GM12878 (cell line): ENCODE measurements at regions of chr2 and their contacts with region 1.

Region 1: DNA sequence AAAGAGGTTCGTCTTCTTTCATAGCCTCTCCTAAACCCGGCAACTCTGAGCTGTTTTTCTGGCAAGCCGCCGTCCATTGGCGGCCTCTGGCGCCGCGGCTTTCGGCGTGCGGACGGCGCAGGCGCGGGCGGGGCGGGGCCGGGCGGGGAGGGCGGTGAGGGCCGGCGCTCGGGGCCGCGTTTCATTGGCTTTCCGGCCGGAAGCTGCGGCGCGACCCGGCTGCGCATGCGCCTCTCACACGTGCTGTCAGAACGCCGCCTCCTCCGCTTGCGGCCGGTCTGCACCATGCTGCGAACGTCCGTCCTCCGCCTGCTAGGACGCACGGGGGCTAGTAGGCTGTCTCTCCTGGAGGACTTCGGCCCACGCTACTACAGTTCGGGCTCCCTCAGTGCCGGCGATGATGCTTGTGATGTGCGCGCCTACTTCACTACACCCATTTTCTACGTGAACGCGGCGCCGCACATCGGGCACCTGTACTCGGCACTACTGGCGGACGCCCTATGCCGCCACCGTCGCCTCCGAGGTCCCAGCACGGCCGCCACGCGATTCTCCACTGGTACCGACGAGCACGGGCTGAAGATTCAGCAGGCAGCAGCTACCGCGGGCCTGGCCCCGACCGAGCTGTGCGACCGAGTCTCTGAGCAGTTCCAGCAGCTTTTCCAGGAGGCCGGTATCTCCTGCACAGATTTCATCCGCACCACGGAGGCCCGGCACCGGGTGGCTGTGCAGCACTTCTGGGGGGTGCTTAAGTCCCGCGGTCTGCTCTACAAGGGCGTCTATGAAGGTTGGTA is at the start of gene MARS2:
- DNase-seq: peak; percentile 68
- ATAC-seq: peak; percentile 86
- H3K4me3 ChIP-seq: peak within 1 kb of the TSS; percentile 81
- H3K27ac ChIP-seq: peak within 1 kb of the TSS; percentile 61
- H3K4me1 ChIP-seq: peaks cover 5% of the 10 kb centered on the region
- H3K27me3 ChIP-seq: no peaks in the 10 kb centered on the region
- CTCF ChIP-seq: 0 out of 6 replicates have a peak, but pooled peaks of 1 of the 3 experiments have one; percentile 4
- EP300 ChIP-seq: 0 out of 4 replicates have a peak, but pooled peaks of 1 of the 2 experiments have one; percentile 19
- POLR2A ChIP-seq: peak; percentile 98
- RAD21 ChIP-seq: no peak
- polyA plus RNA-seq, gene MARS2: 4.0 to 6.9 TPM

Region 2: DNA sequence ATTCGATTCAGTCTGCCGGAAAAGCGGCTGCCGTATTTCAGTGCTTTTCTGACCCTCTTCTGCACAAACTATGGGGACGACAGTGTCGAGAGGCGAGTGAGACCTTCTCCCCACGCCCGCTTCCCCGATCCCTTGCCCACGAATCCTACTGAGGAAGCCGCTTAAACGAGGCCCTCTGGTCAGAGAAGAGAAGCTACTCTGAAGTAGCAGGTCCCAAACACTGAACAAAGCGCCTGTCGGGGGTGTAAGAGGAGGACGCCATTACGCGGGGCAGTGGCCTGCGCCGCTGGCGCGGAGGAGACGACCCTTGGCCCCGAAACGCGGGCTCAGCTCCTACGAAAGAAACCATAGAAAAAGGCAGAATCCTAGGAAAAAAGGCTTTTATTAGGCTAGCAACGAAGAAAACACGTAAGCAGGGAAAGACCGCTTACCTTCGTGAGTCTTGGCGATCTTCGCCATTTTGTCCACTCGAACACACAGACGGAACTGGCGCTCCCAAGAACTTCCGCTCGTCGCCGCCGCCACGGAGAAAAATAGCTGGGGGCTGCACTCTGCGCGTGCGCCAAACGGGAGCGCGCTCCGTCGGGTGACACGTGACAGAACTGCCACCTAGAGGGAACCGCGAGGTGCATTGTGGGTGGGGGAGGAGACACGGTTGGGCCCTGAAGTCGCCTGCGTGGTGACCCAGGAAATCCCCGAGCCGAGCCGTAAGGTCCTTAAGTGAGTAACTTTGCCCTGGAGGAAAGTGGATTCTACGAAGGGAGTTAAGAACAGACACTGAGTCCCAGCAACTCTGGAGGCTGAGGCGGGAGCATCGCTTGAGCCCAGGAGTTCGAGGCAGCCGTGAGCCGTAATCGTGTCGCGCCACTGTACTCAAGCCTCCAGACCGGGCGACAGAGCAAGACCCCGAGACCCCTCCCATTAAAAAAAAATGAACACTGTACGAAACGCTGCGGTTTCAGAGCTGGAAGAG is 270.5 kb before region 1 on chr2 and contains the start of gene SF3B1:
- CTCF ChIA-PET with region 1: interaction called, 4 read pairs
- POLR2A ChIA-PET with region 1: interaction called, 4 read pairs
- RAD21 ChIA-PET with region 1: interaction called, 3 read pairs
- SMC1A ChIA-PET with region 1: interaction called, 3 read pairs
- in situ Hi-C with region 1: no loop called
- intact Hi-C with region 1: loop called (anchors 2 kb)
- DNase-seq: peak; percentile 95
- ATAC-seq: peak; percentile 91
- H3K4me3 ChIP-seq: peak within 1 kb of the TSS; percentile 92
- H3K27ac ChIP-seq: peak within 1 kb of the TSS; percentile 99
- H3K4me1 ChIP-seq: peaks cover 4% of the 10 kb centered on the region; the same call in 1 of the 2 replicates
- H3K27me3 ChIP-seq: no peaks in the 10 kb centered on the region
- CTCF ChIP-seq: no peak
- EP300 ChIP-seq: peak in 1 of 2 experiments; percentile 51; a peak in 1 of 4 replicates
- POLR2A ChIP-seq: peak; percentile 93
- RAD21 ChIP-seq: no peak
- polyA plus RNA-seq, gene SF3B1: 163 to 170 TPM

Region 3: DNA sequence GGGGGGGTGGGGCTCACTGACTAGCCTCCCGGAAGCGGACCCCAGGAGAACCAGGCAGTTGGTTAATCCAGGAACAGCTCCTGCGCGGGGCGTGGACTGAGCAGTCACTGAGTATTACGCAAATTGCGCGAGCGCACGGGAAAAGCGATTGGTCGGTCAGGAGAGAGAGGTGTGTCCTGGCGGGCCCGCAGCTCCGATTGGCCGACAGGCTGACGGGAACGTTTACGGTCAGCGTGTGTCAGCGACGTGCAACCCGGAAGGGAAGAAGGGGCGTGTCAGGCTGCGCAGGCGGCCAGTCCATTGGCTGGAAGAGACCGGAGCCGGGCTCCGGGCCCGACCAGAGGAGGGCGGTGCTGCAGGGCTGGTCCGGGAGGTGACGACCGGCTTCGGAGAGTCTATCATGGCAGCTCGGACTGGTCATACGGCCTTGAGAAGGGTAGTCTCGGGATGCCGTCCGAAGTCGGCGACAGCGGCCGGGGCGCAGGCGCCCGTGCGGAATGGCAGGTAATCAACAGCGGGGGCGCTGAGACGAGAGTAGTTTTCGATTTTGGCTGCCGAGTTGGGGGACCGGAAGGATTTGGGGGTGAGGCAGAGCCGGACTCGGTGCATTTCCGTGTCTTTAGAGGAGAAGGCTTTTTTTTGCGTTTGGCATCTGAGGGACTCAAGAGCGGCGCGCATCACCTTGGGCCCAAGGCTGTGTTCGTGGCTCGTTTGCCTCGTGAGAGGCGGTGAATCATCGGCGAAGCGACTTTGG is 252.0 kb before region 1 on chr2 and contains the start of gene COQ10B:
- CTCF ChIA-PET with region 1: no interaction called
- POLR2A ChIA-PET with region 1: interaction called, 6 read pairs
- RAD21 ChIA-PET with region 1: interaction called, 7 read pairs
- SMC1A ChIA-PET with region 1: no interaction called
- in situ Hi-C with region 1: no loop called
- intact Hi-C with region 1: loop called (anchors 5 kb)
- DNase-seq: peak; percentile 99
- ATAC-seq: peak; percentile 96
- H3K4me3 ChIP-seq: peak within 1 kb of the TSS; percentile 94
- H3K27ac ChIP-seq: peak within 1 kb of the TSS; percentile 88
- H3K4me1 ChIP-seq: no peaks in the 10 kb centered on the region
- H3K27me3 ChIP-seq: no peaks in the 10 kb centered on the region
- CTCF ChIP-seq: peak in 2 of 3 experiments; percentile 23 to 34; a peak in 3 of 6 replicates
- EP300 ChIP-seq: no peak
- POLR2A ChIP-seq: peak; percentile 89
- RAD21 ChIP-seq: no peak
- polyA plus RNA-seq, gene COQ10B: 7.7 to 13.1 TPM

Region 4: GRCh38 chr2:197477797-197478196 is 227.5 kb before region 1 on chr2:
- CTCF ChIA-PET with region 1: no interaction called
- POLR2A ChIA-PET with region 1: no interaction called
- RAD21 ChIA-PET with region 1: no interaction called
- SMC1A ChIA-PET with region 1: no interaction called
- in situ Hi-C with region 1: no loop called
- intact Hi-C with region 1: no loop called
- DNase-seq: no peak
- ATAC-seq: no peak
- H3K4me3 ChIP-seq: no peak overlapping the region
- H3K27ac ChIP-seq: no peak overlapping the region
- H3K4me1 ChIP-seq: no peaks in the 10 kb centered on the region
- H3K27me3 ChIP-seq: no peaks in the 10 kb centered on the region
- CTCF ChIP-seq: no peak
- EP300 ChIP-seq: no peak
- POLR2A ChIP-seq: no peak
- RAD21 ChIP-seq: no peak

Region 5: GRCh38 chr2:197515739-197516392 is 189.4 kb before region 1 on chr2 and contains the start of gene MOB4:
- CTCF ChIA-PET with region 1: no interaction called
- POLR2A ChIA-PET with region 1: interaction called, 4 read pairs
- RAD21 ChIA-PET with region 1: interaction called, 7 read pairs
- SMC1A ChIA-PET with region 1: interaction called, 3 read pairs
- in situ Hi-C with region 1: no loop called
- intact Hi-C with region 1: loop called (anchors 5 kb)
- DNase-seq: peak; percentile 82
- ATAC-seq: peak; percentile 95
- H3K4me3 ChIP-seq: peak within 1 kb of the TSS; percentile 99
- H3K27ac ChIP-seq: peak within 1 kb of the TSS; percentile 95
- H3K4me1 ChIP-seq: peaks cover 7% of the 10 kb centered on the region
- H3K27me3 ChIP-seq: no peaks in the 10 kb centered on the region
- CTCF ChIP-seq: no peak
- EP300 ChIP-seq: peak in 1 of 2 experiments; percentile 99; a peak in 2 of 4 replicates
- POLR2A ChIP-seq: peak; percentile 98
- RAD21 ChIP-seq: no peak
- polyA plus RNA-seq, gene MOB4: 40.6 to 43.4 TPM

Region 6: GRCh38 chr2:197604117-197604860 is 101.0 kb before region 1 on chr2:
- CTCF ChIA-PET with region 1: interaction called, 3 read pairs
- POLR2A ChIA-PET with region 1: no interaction called
- RAD21 ChIA-PET with region 1: interaction called, 3 read pairs
- SMC1A ChIA-PET with region 1: interaction called, 3 read pairs
- in situ Hi-C with region 1: no loop called
- intact Hi-C with region 1: loop called (anchors 5 kb)
- DNase-seq: no peak
- ATAC-seq: peak; percentile 50
- H3K4me3 ChIP-seq: no peak overlapping the region
- H3K27ac ChIP-seq: no peak overlapping the region
- H3K4me1 ChIP-seq: peaks cover 15% of the 10 kb centered on the region
- H3K27me3 ChIP-seq: no peaks in the 10 kb centered on the region
- CTCF ChIP-seq: no peak
- EP300 ChIP-seq: no peak
- POLR2A ChIP-seq: no peak
- RAD21 ChIP-seq: no peak

Region 7: DNA sequence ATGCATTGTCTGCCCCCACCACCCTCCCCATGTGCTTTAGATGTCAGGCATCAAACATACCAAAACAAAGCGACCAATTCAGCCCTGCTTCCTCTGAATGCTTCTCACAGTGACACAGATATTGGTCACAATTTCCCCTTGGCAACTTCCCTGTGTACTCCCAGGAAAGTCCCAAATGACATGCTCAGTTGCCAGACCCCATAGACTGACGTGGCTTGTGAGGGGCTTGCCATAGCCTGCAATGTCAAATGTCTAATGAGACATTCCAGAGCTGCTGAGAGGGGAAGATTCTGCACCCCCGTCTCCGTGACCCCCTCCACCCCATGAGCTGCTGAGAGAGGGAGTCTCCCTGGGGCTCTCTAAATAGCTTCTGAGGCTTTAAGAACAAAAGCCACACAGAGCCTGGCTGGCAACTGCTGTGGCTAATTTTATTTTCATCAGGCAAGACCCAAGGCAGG is 77.2 kb before region 1 on chr2:
- CTCF ChIA-PET with region 1: no interaction called
- POLR2A ChIA-PET with region 1: no interaction called
- RAD21 ChIA-PET with region 1: interaction called, 8 read pairs
- SMC1A ChIA-PET with region 1: interaction called, 3 read pairs
- in situ Hi-C with region 1: no loop called
- intact Hi-C with region 1: loop called (anchors 5 kb)
- DNase-seq: peak; percentile 79
- ATAC-seq: peak; percentile 87
- H3K4me3 ChIP-seq: 0 out of 2 replicates have a peak overlapping the region, but pooled peaks have one; percentile 18
- H3K27ac ChIP-seq: peak overlapping the region; percentile 54
- H3K4me1 ChIP-seq: peaks cover 9% of the 10 kb centered on the region
- H3K27me3 ChIP-seq: no peaks in the 10 kb centered on the region
- CTCF ChIP-seq: no peak
- EP300 ChIP-seq: no peak
- POLR2A ChIP-seq: no peak
- RAD21 ChIP-seq: peak; percentile 5; the same call in 1 of the 2 replicates

Region 8: DNA sequence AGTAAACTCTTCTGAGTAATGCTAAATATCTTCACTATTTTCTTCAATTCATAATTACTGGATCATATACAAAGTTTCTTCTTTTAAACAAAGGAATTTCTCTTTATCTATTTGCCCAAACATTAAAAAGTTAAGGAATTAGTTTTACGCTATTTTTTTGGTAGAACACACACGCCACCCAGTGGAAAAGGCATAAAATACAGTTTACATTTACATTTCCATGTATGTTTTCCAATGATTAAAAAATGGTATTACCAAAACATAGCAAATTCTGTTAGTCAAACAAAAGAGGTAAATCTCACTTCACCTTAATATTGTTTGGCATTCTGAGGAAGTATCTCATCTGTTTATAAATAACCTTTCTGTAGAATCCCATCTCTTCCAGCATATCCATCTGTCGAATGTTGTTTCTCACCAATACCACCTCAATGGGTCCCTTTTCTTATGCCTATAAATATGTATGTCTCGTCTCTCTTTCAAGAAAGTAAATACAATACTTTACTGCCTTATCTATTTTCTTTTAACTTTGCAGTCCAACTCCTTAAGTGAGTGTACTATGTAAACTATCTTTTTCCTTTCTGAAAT is 72.6 kb after region 1 on chr2:
- CTCF ChIA-PET with region 1: interaction called, 60 read pairs
- POLR2A ChIA-PET with region 1: interaction called, 5 read pairs
- RAD21 ChIA-PET with region 1: interaction called, 21 read pairs
- SMC1A ChIA-PET with region 1: interaction called, 58 read pairs
- in situ Hi-C with region 1: loop called (anchors 5 kb)
- intact Hi-C with region 1: loop called (anchors 1 kb)
- DNase-seq: peak; percentile 12
- ATAC-seq: no peak
- H3K4me3 ChIP-seq: no peak overlapping the region
- H3K27ac ChIP-seq: no peak overlapping the region
- H3K4me1 ChIP-seq: no peaks in the 10 kb centered on the region
- H3K27me3 ChIP-seq: no peaks in the 10 kb centered on the region
- CTCF ChIP-seq: peak; percentile 47 to 69 (median 50); a peak in 4 of 6 replicates
- EP300 ChIP-seq: no peak
- POLR2A ChIP-seq: no peak
- RAD21 ChIP-seq: peak; percentile 85